ENCODE measurements at regions of chr1 and their contacts with region 1.

Region 1: GRCh38 chr1:94335950-94336349 is 82.2 kb upstream of the ABCD3 start:
- DNase-seq: peak; percentile 67 to 95
- H3K4me3 ChIP-seq: no peak overlapping the region
- H3K27ac ChIP-seq: peak overlapping the region; percentile 22; the same call in 1 of the 2 replicates
- H3K4me1 ChIP-seq: peaks cover 55% of the 10 kb centered on the region
- H3K27me3 ChIP-seq: no peaks in the 10 kb centered on the region
- CTCF ChIP-seq: peak; percentile 99

Region 2: GRCh38 chr1:93878889-93879586 is 456.9 kb before region 1 on chr1 and contains the start of gene DNTTIP2:
- CTCF ChIA-PET with region 1: interaction called, 5 read pairs
- POLR2A ChIA-PET with region 1: no interaction called
- intact Hi-C with region 1: loop called (anchors 2 kb)
- DNase-seq: peak; percentile 88 to 89
- H3K4me3 ChIP-seq: peak within 1 kb of the TSS; percentile 85
- H3K27ac ChIP-seq: peak within 1 kb of the TSS; percentile 95
- H3K4me1 ChIP-seq: peaks cover 29% of the 10 kb centered on the region
- H3K27me3 ChIP-seq: no peaks in the 10 kb centered on the region
- CTCF ChIP-seq: no peak
- total RNA-seq, gene DNTTIP2: 85.7 and 93.4 TPM in 2 replicates

Region 3: GRCh38 chr1:94025383-94026340 is 310.3 kb before region 1 on chr1:
- CTCF ChIA-PET with region 1: interaction called, 39 read pairs
- POLR2A ChIA-PET with region 1: interaction called, 6 read pairs
- intact Hi-C with region 1: loop called (anchors 1 kb)
- DNase-seq: peak; percentile 54 to 77
- H3K4me3 ChIP-seq: no peak overlapping the region
- H3K27ac ChIP-seq: no peak overlapping the region
- H3K4me1 ChIP-seq: peaks cover 49% of the 10 kb centered on the region
- H3K27me3 ChIP-seq: no peaks in the 10 kb centered on the region
- CTCF ChIP-seq: peak; percentile 91

Region 4: DNA sequence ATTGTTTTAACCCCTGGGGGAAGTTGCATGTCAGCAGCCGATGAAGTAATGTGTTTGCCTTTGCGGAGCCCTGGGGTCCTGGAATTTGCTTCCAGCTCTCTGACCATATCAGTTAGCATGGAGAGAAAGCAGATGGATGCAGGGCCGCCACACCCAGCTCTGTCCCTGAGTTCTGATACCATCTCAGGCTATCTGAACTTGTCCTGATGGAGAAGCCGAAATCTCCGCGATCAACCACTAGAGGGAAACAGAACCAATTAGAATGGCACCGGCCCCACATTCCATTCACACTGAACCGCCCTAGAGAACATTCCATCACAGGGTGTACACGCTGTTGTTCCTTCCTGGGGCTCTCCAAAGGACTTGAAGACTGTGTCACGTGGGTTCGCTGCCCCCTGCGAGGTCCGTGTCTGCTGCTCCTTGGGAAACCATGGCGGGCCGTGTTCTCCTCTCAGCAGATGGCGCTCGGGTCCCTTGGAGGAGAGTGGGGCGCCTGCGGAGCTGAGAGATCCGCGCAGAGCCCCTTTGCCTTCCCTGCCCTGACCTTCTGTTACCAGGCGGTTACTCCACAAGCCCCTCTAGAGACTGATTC is 290.4 kb before region 1 on chr1:
- CTCF ChIA-PET with region 1: interaction called, 17 read pairs
- POLR2A ChIA-PET with region 1: interaction called, 3 read pairs
- intact Hi-C with region 1: loop called (anchors 1 kb)
- DNase-seq: peak; percentile 92 to 97
- H3K4me3 ChIP-seq: no peak overlapping the region
- H3K27ac ChIP-seq: peak overlapping the region; percentile 28
- H3K4me1 ChIP-seq: peaks cover 30% of the 10 kb centered on the region
- H3K27me3 ChIP-seq: no peaks in the 10 kb centered on the region
- CTCF ChIP-seq: peak; percentile 90

Region 5: GRCh38 chr1:94180650-94181049 is 155.3 kb before region 1 on chr1:
- CTCF ChIA-PET with region 1: no interaction called
- POLR2A ChIA-PET with region 1: interaction called, 13 read pairs
- intact Hi-C with region 1: no loop called
- DNase-seq: no peak
- H3K4me3 ChIP-seq: no peak overlapping the region
- H3K27ac ChIP-seq: peak overlapping the region; percentile 31
- H3K4me1 ChIP-seq: no peaks in the 10 kb centered on the region
- H3K27me3 ChIP-seq: no peaks in the 10 kb centered on the region
- CTCF ChIP-seq: no peak

Region 6: DNA sequence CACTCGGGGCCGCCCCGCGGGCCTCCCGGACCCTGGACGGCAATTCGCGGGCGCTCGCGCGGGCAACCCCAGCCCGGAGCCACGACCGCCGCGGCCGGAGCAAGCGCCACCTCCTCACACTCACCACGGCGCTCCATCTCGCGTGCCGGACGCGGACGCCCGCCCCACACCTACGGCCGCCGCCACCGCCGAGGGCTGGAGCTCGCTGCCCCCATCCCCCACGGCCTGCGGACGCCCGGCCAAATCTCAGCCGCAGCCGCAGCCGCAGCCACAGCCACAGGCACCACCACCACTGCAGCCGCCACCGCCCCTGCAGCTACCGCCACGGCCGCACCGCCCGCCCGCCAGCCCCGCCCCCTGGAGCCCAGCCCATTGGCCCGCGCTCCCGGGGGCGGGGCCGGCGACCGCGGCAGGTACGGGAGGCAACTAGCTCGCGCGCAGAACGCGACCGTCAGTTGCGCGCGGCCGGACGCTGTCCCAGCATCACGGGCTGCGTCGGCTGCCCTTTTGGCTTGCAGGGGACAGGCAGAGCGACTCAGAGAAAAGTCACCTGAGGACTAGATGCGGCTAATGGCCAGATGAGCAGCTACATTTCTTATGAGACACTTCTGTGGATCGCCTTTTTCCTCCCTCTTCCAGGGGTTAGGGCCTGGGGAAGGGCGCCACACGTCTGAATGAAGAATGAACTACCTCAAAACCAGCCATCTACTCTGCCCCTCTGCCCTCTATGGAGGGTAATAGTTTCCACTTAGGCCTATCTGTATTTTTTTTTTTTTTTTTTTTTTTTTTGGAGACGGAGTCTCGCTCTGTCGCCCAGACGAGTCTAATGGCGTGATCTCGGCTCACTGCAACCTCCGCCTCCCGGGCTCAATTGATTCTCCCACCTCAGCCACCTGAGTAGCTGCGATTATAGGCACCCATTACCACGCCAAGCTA is 98.4 kb before region 1 on chr1 and contains the start of gene ARHGAP29:
- CTCF ChIA-PET with region 1: interaction called, 4 read pairs
- POLR2A ChIA-PET with region 1: interaction called, 9 read pairs
- intact Hi-C with region 1: loop called (anchors 2 kb)
- DNase-seq: peak; percentile 88 to 91
- H3K4me3 ChIP-seq: peak within 1 kb of the TSS; percentile 87
- H3K27ac ChIP-seq: peak within 1 kb of the TSS; percentile 85
- H3K4me1 ChIP-seq: peaks cover 70% of the 10 kb centered on the region
- H3K27me3 ChIP-seq: no peaks in the 10 kb centered on the region
- CTCF ChIP-seq: no peak
- total RNA-seq, gene ARHGAP29: 123 and 137 TPM in 2 replicates

Region 7: GRCh38 chr1:94276988-94277434 is 58.9 kb before region 1 on chr1:
- CTCF ChIA-PET with region 1: no interaction called
- POLR2A ChIA-PET with region 1: no interaction called
- intact Hi-C with region 1: no loop called
- DNase-seq: peak in 1 of 2 experiments; percentile 12
- H3K4me3 ChIP-seq: no peak overlapping the region
- H3K27ac ChIP-seq: no peak overlapping the region
- H3K4me1 ChIP-seq: peaks cover 3% of the 10 kb centered on the region; the same call in 1 of the 2 replicates
- H3K27me3 ChIP-seq: no peaks in the 10 kb centered on the region
- CTCF ChIP-seq: no peak

Region 8: GRCh38 chr1:94463765-94464330 is 127.9 kb after region 1 on chr1:
- CTCF ChIA-PET with region 1: interaction called, 7 read pairs
- POLR2A ChIA-PET with region 1: interaction called, 3 read pairs
- intact Hi-C with region 1: loop called (anchors 1 kb)
- DNase-seq: peak; percentile 29 to 67
- H3K4me3 ChIP-seq: no peak overlapping the region
- H3K27ac ChIP-seq: peak overlapping the region; percentile 11; the same call in 1 of the 2 replicates
- H3K4me1 ChIP-seq: peaks cover 5% of the 10 kb centered on the region
- H3K27me3 ChIP-seq: no peaks in the 10 kb centered on the region
- CTCF ChIP-seq: peak; percentile 86

Measured in PC-9 (cell line).